PC-9 (cell line): ENCODE measurements at regions of chr10 and their contacts with region 1.

Region 1: DNA sequence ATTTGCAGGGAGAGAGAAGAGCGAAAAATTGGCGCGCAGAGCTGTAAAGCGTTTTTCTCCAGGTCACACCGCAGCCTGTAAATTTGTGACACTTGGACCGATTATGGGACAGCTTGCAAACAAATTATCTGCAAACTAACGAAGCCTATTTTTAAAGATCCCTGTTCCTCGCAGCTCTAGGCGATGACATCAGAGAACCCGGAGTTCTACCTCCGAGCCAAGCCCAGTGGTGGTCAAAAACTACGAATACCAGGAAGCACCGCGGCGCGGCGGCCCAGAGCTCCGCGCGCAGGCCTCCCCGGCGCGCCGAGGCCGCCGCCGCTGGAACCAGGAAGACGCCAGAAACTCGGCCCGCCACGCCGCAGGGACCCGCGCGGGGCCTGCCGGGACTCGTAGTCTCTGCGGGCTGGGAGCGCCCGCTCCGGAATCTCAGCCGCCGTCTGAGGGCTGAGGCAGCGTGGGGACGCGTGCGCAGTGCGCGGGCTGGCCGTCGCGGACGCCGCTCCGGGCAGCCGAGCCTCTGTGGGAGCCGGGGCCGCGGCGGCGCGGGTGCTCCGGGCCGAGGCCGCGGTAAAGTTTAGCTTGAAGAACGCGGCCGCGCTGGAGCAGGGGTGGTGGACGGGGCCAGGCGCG is at the start of gene PLEKHA1:
- DNase-seq: peak; percentile 79 to 91
- H3K4me3 ChIP-seq: peak within 1 kb of the TSS; percentile 62
- H3K27ac ChIP-seq: peak within 1 kb of the TSS; percentile 50
- H3K4me1 ChIP-seq: peaks cover 18% of the 10 kb centered on the region
- H3K27me3 ChIP-seq: no peaks in the 10 kb centered on the region
- CTCF ChIP-seq: no peak; the same call in 1 of the 2 replicates
- total RNA-seq, gene PLEKHA1: 33.8 and 39.9 TPM in 2 replicates

Region 2: GRCh38 chr10:122279725-122280141 is 94.6 kb before region 1 on chr10:
- CTCF ChIA-PET with region 1: no interaction called
- POLR2A ChIA-PET with region 1: no interaction called
- intact Hi-C with region 1: no loop called
- DNase-seq: peak in 1 of 2 experiments; percentile 64
- H3K4me3 ChIP-seq: no peak overlapping the region
- H3K27ac ChIP-seq: no peak overlapping the region
- H3K4me1 ChIP-seq: no peaks in the 10 kb centered on the region
- H3K27me3 ChIP-seq: no peaks in the 10 kb centered on the region
- CTCF ChIP-seq: peak; percentile 71

Region 3: GRCh38 chr10:122293156-122293960 is 81.0 kb before region 1 on chr10:
- CTCF ChIA-PET with region 1: interaction called, 11 read pairs
- POLR2A ChIA-PET with region 1: no interaction called
- intact Hi-C with region 1: loop called (anchors 10 kb)
- DNase-seq: peak in 1 of 2 experiments; percentile 82
- H3K4me3 ChIP-seq: no peak overlapping the region
- H3K27ac ChIP-seq: peak overlapping the region; percentile 90
- H3K4me1 ChIP-seq: peaks cover 55% of the 10 kb centered on the region
- H3K27me3 ChIP-seq: no peaks in the 10 kb centered on the region
- CTCF ChIP-seq: no peak

Region 4: GRCh38 chr10:122298598-122299301 is 75.6 kb before region 1 on chr10:
- CTCF ChIA-PET with region 1: no interaction called
- POLR2A ChIA-PET with region 1: no interaction called
- intact Hi-C with region 1: loop called (anchors 10 kb)
- DNase-seq: peak; percentile 56 to 65
- H3K4me3 ChIP-seq: no peak overlapping the region; the same call in 1 of the 2 replicates
- H3K27ac ChIP-seq: no peak overlapping the region
- H3K4me1 ChIP-seq: peaks cover 19% of the 10 kb centered on the region
- H3K27me3 ChIP-seq: no peaks in the 10 kb centered on the region
- CTCF ChIP-seq: peak; percentile 84